ENCODE measurements at regions of chr17 and their contacts with region 1.

Region 1: DNA sequence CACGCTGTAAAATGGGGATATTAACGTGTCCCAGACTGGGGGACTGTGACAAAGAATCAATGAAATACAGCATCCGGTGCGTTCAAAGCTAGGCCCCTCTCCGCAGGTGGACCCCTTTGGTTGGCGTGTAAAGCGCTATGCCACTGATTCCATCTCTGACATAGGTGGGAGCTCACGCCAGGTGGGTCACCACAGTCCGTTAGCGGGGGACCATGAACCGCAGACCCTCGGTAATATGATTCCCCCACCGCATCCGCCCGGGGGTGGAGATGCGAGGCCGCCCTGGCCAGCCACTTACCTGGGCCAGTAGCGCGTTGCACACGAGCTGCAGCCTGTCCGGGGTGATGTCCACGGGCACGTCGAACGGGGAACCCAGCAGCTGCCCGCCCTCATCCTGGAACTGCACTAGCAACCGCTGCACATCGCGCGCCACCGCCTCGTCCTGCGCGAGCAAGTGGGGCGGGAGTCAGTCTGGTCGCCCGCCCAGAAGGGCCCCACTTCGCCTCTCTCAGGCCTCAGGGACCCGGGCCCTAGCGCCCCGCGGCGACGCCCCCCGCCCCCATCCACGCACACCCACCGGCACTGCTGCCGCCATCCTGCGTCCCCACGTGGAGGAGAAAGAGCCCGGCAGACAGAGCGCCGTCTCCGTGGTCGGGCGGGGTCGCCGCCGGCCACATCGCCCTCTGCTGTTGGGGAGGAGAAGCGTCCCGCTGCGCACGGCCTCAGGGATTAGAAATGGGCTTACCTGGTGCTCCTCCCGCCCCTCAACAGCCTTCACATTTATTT is at the start of gene NLE1:
- DNase-seq: peak; percentile 86 to 93
- ATAC-seq: peak; percentile 96 to 97
- H3K4me3 ChIP-seq: peak within 1 kb of the TSS; percentile 87
- H3K27ac ChIP-seq: peak within 1 kb of the TSS; percentile 84 to 93
- H3K4me1 ChIP-seq: peaks cover 9% of the 10 kb centered on the region; the same call in 2 of the 3 replicates
- CTCF ChIP-seq: peak; percentile 90
- EP300 ChIP-seq: no peak
- POLR2A ChIP-seq: peak; percentile 87
- RAD21 ChIP-seq: peak; percentile 30 to 48
- polyA plus RNA-seq, gene NLE1: 19.3 and 20.9 TPM in 2 replicates

Region 2: GRCh38 chr17:35063514-35064223 is 78.2 kb before region 1 on chr17 and contains the start of gene RFFL:
- CTCF ChIA-PET with region 1: no interaction called
- POLR2A ChIA-PET with region 1: no interaction called
- DNase-seq: peak; percentile 99
- ATAC-seq: peak; percentile 97 to 100
- H3K4me3 ChIP-seq: peak within 1 kb of the TSS; percentile 38
- H3K27ac ChIP-seq: peak within 1 kb of the TSS; percentile 92 to 93
- H3K4me1 ChIP-seq: peaks cover 59% of the 10 kb centered on the region
- CTCF ChIP-seq: no peak
- EP300 ChIP-seq: peak; percentile 61 to 86; a peak in 3 of 5 replicates
- POLR2A ChIP-seq: peak; percentile 31
- RAD21 ChIP-seq: peak; percentile 56 to 67
- polyA plus RNA-seq, gene RFFL: 35.5 and 49.4 TPM in 2 replicates

Region 3: GRCh38 chr17:35103271-35103670 is 38.6 kb before region 1 on chr17:
- CTCF ChIA-PET with region 1: no interaction called
- POLR2A ChIA-PET with region 1: no interaction called
- DNase-seq: no peak
- ATAC-seq: no peak
- H3K4me3 ChIP-seq: no peak overlapping the region
- H3K27ac ChIP-seq: no peak overlapping the region
- H3K4me1 ChIP-seq: no peaks in the 10 kb centered on the region
- CTCF ChIP-seq: no peak
- EP300 ChIP-seq: no peak
- POLR2A ChIP-seq: no peak
- RAD21 ChIP-seq: no peak

Region 4: DNA sequence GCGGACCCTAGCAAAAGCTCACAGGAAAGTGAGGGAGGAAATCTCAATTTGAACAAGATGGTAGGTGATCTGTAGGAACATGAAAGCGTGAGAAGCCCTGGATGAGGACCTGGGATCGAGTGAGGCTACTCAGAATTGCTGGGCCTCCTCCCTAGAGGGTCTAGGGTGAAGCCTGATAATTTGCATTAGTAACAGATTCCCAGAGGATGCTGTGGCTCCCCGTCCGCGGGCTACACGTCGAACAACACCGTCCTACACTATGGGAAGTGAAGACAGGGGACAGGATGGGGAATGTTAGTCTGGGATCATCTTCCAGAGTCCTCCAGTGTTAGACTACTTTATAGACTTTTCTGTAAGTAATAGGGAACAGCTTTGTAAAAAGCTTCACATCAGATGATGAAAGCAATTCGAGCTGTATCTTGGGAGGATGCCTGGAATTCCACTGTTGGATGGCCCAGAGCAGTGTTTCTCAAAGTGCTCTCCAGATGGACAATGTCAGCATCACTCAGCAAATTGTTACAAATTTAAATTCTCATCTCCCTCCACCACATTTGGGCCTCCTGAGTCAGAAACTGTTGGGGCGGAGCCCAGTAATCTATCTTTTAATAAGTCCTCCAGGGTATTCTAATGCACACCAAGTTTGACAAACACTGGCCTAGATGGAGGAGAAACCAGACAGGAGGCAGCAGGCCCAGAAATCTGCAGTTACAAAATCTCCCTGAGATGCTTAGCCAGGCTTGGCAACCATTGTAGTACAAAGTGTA is 13.9 kb before region 1 on chr17:
- CTCF ChIA-PET with region 1: interaction called, 16 read pairs
- POLR2A ChIA-PET with region 1: no interaction called
- DNase-seq: no peak
- ATAC-seq: no peak; a peak in 2 of 6 replicates
- H3K4me3 ChIP-seq: no peak overlapping the region
- H3K27ac ChIP-seq: no peak overlapping the region
- H3K4me1 ChIP-seq: no peaks in the 10 kb centered on the region
- CTCF ChIP-seq: no peak
- EP300 ChIP-seq: no peak
- POLR2A ChIP-seq: no peak
- RAD21 ChIP-seq: no peak

Measured in A549 (cell line).